Dorsolateral prefrontal cortex (tissue), 120 donors: ENCODE measurements at regions of chr12 and their contacts with region 1.

Region 1: GRCh38 chr12:68807576-68808387 is at the start of gene MDM2:
- DNase-seq: peak; percentile 79 to 92 (median 86)
- H3K4me3 ChIP-seq: peak within 1 kb of the TSS; percentile 67 to 100 (median 96)
- H3K27ac ChIP-seq: peak within 1 kb of the TSS; percentile 92 to 100 (median 98)
- H3K27me3 ChIP-seq: no peaks in the 10 kb centered on the region
- CTCF ChIP-seq: peak; percentile 45 to 91 (median 75)
- total RNA-seq, gene MDM2: 64.6 to 129 (median 89.8) TPM

Region 2: GRCh38 chr12:68331869-68332727 is 475.7 kb before region 1 on chr12 and contains the start of gene MDM1:
- intact Hi-C with region 1: loop called in 1 of 2 experiments (anchors 5 kb)
- DNase-seq: peak; percentile 95 to 99 (median 98)
- H3K4me3 ChIP-seq: peak within 1 kb of the TSS; percentile 42 to 97 (median 91)
- H3K27ac ChIP-seq: peak within 1 kb of the TSS in 55 of 59 donors; percentile 3 to 88 (median 71)
- H3K27me3 ChIP-seq: no peaks in the 10 kb centered on the region
- CTCF ChIP-seq: peak in 31 of 56 donors; percentile 6 to 57 (median 23)
- total RNA-seq, gene MDM1: 14.8 to 35.5 (median 23.6) TPM

Region 3: GRCh38 chr12:68610370-68611093 is 197.2 kb before region 1 on chr12 and contains the start of gene RAP1B:
- intact Hi-C with region 1: loop called in 1 of 2 experiments (anchors 5 kb)
- DNase-seq: peak; percentile 77 to 96 (median 90)
- H3K4me3 ChIP-seq: peak within 1 kb of the TSS; percentile 57 to 94 (median 82)
- H3K27ac ChIP-seq: peak within 1 kb of the TSS; percentile 60 to 97 (median 89)
- H3K27me3 ChIP-seq: no peaks in the 10 kb centered on the region
- CTCF ChIP-seq: peak in 16 of 56 donors; percentile 2 to 34 (median 18)
- total RNA-seq, gene RAP1B: 39.9 to 92.7 (median 63.1) TPM

Region 4: DNA sequence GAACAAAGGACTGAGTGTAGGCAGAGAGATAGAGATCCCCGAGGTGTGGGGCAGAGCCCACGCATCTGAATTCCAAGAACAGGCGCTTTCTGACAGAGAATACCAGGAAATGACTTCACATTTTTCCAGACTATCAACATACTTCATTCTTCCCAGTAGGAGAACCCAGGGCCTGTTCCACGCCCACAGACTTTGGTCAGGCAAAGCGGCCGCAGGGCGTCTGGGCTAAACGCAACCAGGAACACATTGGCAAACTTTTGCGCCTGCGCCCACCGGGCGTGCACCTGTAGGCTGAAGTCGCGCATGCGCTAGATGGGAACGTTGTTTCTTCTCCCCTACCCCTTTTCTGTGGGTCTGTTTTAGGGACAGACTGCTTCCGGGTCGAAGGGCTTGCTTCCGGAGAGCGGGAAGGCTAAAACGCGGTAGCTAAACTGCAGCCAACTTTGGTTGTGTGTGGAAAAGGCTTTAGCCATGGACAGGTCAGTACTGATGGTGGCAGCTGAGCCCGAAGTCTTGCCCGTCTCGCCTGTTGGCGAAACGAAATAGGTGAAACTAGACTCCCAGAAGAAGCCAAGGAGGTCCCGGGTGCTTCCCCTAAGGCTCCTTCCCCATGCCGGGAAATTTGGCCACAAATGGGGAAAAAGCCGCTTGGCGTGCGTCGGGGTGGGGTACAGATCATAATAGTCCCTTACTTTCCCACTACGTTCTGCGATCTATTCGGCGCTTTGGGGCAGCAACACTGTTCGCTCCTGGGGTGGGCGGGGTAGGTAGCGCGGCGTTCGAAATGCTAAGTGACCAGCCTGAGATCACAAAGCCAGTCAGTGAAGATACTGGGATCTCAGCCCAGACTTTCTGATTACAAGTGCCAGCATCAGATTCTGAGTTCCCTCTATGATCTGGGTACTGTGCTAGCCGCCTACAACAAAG is 120.9 kb before region 1 on chr12 and contains the start of gene NUP107:
- intact Hi-C with region 1: loop called in 1 of 2 experiments (anchors 5 kb)
- DNase-seq: peak; percentile 92 to 98 (median 94)
- H3K4me3 ChIP-seq: peak within 1 kb of the TSS; percentile 61 to 100 (median 93)
- H3K27ac ChIP-seq: peak within 1 kb of the TSS in 58 of 59 donors; percentile 38 to 93 (median 82)
- H3K27me3 ChIP-seq: no peaks in the 10 kb centered on the region
- CTCF ChIP-seq: peak in 46 of 56 donors; percentile 12 to 57 (median 34)
- total RNA-seq, gene NUP107: 15.0 to 41.1 (median 24.5) TPM

Region 5: GRCh38 chr12:68745904-68746571 is 61.7 kb before region 1 on chr12 and contains the start of gene SLC35E3:
- intact Hi-C with region 1: loop called (anchors 2 kb)
- DNase-seq: peak; percentile 91 to 96 (median 95)
- H3K4me3 ChIP-seq: peak within 1 kb of the TSS; percentile 54 to 97 (median 85)
- H3K27ac ChIP-seq: peak within 1 kb of the TSS; percentile 19 to 94 (median 86)
- H3K27me3 ChIP-seq: no peaks in the 10 kb centered on the region
- CTCF ChIP-seq: peak in 31 of 56 donors; percentile 4 to 64 (median 28)
- total RNA-seq, gene SLC35E3: 11.5 to 32.1 (median 18.4) TPM

Region 6: GRCh38 chr12:69254046-69254445 is 446.3 kb after region 1 on chr12:
- intact Hi-C with region 1: loop called in 1 of 2 experiments (anchors 10 kb)
- DNase-seq: no peak
- H3K4me3 ChIP-seq: no peak overlapping the region
- H3K27ac ChIP-seq: peak overlapping the region in 2 of 59 donors; percentile 13 to 26
- H3K27me3 ChIP-seq: no peaks in the 10 kb centered on the region
- CTCF ChIP-seq: peak; percentile 54 to 90 (median 76)